ENCODE measurements at regions of chr9 and their contacts with region 1.

Region 1: GRCh38 chr9:112361601-112362000 is 18.3 kb upstream of the HSDL2 start:
- DNase-seq: peak in 2 of 4 experiments; percentile 18 to 59
- ATAC-seq: peak; percentile 80
- H3K4me3 ChIP-seq: no peak overlapping the region
- H3K27ac ChIP-seq: no peak overlapping the region
- H3K4me1 ChIP-seq: no peaks in the 10 kb centered on the region
- H3K27me3 ChIP-seq: no peaks in the 10 kb centered on the region
- CTCF ChIP-seq: peak; percentile 34 to 72 (median 36); a peak in 3 of 6 replicates
- EP300 ChIP-seq: no peak
- POLR2A ChIP-seq: no peak
- RAD21 ChIP-seq: peak; percentile 68 to 88

Region 2: GRCh38 chr9:111965566-111966019 is 396.0 kb before region 1 on chr9:
- CTCF ChIA-PET with region 1: no interaction called
- POLR2A ChIA-PET with region 1: no interaction called
- in situ Hi-C with region 1: no loop called
- intact Hi-C with region 1: loop called (anchors 10 kb)
- DNase-seq: no peak
- ATAC-seq: no peak
- H3K4me3 ChIP-seq: no peak overlapping the region
- H3K27ac ChIP-seq: no peak overlapping the region
- H3K4me1 ChIP-seq: peaks cover 12 to 31% of the 10 kb centered on the region in 2 experiments; a peak in 3 of 5 replicates
- H3K27me3 ChIP-seq: no peaks in the 10 kb centered on the region
- CTCF ChIP-seq: no peak
- EP300 ChIP-seq: no peak
- POLR2A ChIP-seq: no peak
- RAD21 ChIP-seq: no peak

Region 3: DNA sequence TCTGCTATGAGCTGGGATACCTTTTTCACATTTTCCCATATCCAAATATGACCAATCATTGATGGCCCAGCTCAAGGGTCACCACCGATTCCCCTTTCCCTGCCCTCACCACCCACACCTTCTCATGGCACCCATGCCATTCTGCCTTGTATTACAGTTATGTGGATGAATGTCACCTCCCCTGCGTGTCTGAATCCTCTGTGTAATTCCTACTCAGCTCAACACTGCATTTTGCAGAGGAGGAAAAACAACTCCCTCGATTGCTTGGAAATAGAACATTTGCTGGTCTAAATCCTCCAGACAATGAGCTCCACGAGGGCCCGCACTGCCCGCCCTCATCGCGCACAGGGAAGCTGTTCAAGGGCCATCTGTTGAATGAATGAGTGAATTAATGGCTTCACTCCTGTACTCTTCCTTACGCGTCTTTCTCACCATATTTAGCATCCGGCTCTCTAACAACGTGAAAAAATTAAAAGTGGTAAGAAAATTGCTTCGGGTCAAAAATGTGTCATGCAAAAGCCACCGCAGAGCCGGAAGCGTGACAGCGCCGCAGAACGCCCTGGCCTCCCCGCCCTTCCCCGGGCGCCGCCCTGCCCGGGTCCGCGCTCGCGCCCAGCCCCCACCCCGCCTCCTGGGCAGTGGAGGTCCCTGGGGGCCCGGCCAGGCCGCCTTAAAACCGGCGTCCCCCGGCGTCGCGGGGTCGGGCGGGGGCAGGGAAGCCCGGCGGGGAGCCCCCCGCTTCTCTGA is 187.2 kb before region 1 on chr9:
- CTCF ChIA-PET with region 1: no interaction called
- POLR2A ChIA-PET with region 1: no interaction called
- in situ Hi-C with region 1: no loop called
- intact Hi-C with region 1: no loop called
- DNase-seq: peak; percentile 86 to 93 (median 90)
- ATAC-seq: peak; percentile 80
- H3K4me3 ChIP-seq: peak overlapping the region; percentile 60
- H3K27ac ChIP-seq: peak overlapping the region; percentile 99
- H3K4me1 ChIP-seq: peaks cover 54 to 70% of the 10 kb centered on the region in 2 experiments
- H3K27me3 ChIP-seq: no peaks in the 10 kb centered on the region
- CTCF ChIP-seq: no peak
- EP300 ChIP-seq: 0 out of 2 replicates have a peak, but pooled peaks have one; percentile 23
- POLR2A ChIP-seq: peak; percentile 54; the same call in 1 of the 2 replicates
- RAD21 ChIP-seq: no peak

Region 4: GRCh38 chr9:112268413-112268812 is 93.2 kb before region 1 on chr9:
- CTCF ChIA-PET with region 1: no interaction called
- POLR2A ChIA-PET with region 1: no interaction called
- in situ Hi-C with region 1: no loop called
- intact Hi-C with region 1: no loop called
- DNase-seq: no peak
- ATAC-seq: no peak
- H3K4me3 ChIP-seq: no peak overlapping the region
- H3K27ac ChIP-seq: no peak overlapping the region
- H3K4me1 ChIP-seq: peaks cover 0 to 3% of the 10 kb centered on the region in 2 experiments; a peak in 3 of 5 replicates
- H3K27me3 ChIP-seq: no peaks in the 10 kb centered on the region
- CTCF ChIP-seq: no peak
- EP300 ChIP-seq: no peak
- POLR2A ChIP-seq: no peak
- RAD21 ChIP-seq: no peak

Region 5: GRCh38 chr9:112348257-112349007 is 13.2 kb before region 1 on chr9:
- CTCF ChIA-PET with region 1: no interaction called
- POLR2A ChIA-PET with region 1: no interaction called
- in situ Hi-C with region 1: no loop called
- intact Hi-C with region 1: no loop called
- DNase-seq: no peak
- ATAC-seq: no peak
- H3K4me3 ChIP-seq: no peak overlapping the region
- H3K27ac ChIP-seq: no peak overlapping the region
- H3K4me1 ChIP-seq: no peaks in the 10 kb centered on the region
- H3K27me3 ChIP-seq: no peaks in the 10 kb centered on the region
- CTCF ChIP-seq: no peak
- EP300 ChIP-seq: no peak
- POLR2A ChIP-seq: no peak
- RAD21 ChIP-seq: no peak

Region 6: GRCh38 chr9:112411626-112412027 is 50.0 kb after region 1 on chr9:
- CTCF ChIA-PET with region 1: no interaction called
- POLR2A ChIA-PET with region 1: no interaction called
- in situ Hi-C with region 1: no loop called
- intact Hi-C with region 1: no loop called
- DNase-seq: no peak
- ATAC-seq: no peak
- H3K4me3 ChIP-seq: no peak overlapping the region
- H3K27ac ChIP-seq: no peak overlapping the region
- H3K4me1 ChIP-seq: no peaks in the 10 kb centered on the region
- H3K27me3 ChIP-seq: no peaks in the 10 kb centered on the region
- CTCF ChIP-seq: no peak
- EP300 ChIP-seq: no peak
- POLR2A ChIP-seq: no peak
- RAD21 ChIP-seq: no peak